SK-N-SH (cell line): ENCODE measurements at regions of chr1 and their contacts with region 1.

Region 1: DNA sequence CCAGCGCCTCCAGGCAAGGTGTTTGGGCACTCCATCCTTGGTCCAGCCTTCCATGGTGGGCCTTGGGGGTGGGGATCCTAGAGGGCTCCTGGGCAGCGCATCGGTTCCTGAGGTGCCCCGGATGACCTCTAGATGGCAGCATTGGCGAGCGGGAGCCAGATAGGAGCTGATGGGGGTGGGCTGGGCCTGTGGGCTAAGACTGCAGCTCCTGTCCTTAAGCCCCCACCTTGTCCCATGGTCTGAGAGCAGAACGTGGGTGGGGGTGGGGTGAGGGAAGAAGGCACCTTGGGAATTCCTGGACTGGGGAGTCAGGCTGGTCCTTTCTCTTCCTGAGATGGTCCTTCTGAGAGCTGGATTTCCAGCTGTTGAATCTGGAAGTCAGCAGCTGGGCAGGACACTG is 93.4 kb upstream of the CSF3R start:
- DNase-seq: peak; percentile 91
- H3K4me3 ChIP-seq: peak overlapping the region in 1 of 2 experiments; percentile 32; a peak in 1 of 4 replicates
- H3K27ac ChIP-seq: no peak overlapping the region
- H3K4me1 ChIP-seq: no peaks in the 10 kb centered on the region; a peak in 1 of 4 replicates
- H3K27me3 ChIP-seq: no peaks in the 10 kb centered on the region
- CTCF ChIP-seq: peak; percentile 83
- EP300 ChIP-seq: no peak
- RAD21 ChIP-seq: peak; percentile 89

Region 2: GRCh38 chr1:36516372-36517325 is 59.5 kb before region 1 on chr1:
- CTCF ChIA-PET with region 1: interaction called, 51 read pairs
- POLR2A ChIA-PET with region 1: no interaction called
- DNase-seq: peak; percentile 87
- H3K4me3 ChIP-seq: peak overlapping the region in 1 of 2 experiments; percentile 43; a peak in 1 of 4 replicates
- H3K27ac ChIP-seq: no peak overlapping the region
- H3K4me1 ChIP-seq: peaks cover 0 to 3% of the 10 kb centered on the region in 2 experiments; a peak in 1 of 4 replicates
- H3K27me3 ChIP-seq: no peaks in the 10 kb centered on the region
- CTCF ChIP-seq: peak; percentile 83
- EP300 ChIP-seq: no peak
- RAD21 ChIP-seq: peak; percentile 93

Region 3: GRCh38 chr1:36594023-36594422 is 17.9 kb after region 1 on chr1:
- CTCF ChIA-PET with region 1: interaction called, 142 read pairs
- POLR2A ChIA-PET with region 1: no interaction called
- DNase-seq: no peak
- H3K4me3 ChIP-seq: no peak overlapping the region
- H3K27ac ChIP-seq: no peak overlapping the region
- H3K4me1 ChIP-seq: no peaks in the 10 kb centered on the region
- H3K27me3 ChIP-seq: no peaks in the 10 kb centered on the region; the same call in 1 of the 2 replicates
- CTCF ChIP-seq: no peak
- EP300 ChIP-seq: no peak
- RAD21 ChIP-seq: no peak

Region 4: GRCh38 chr1:36650200-36651065 is 74.3 kb after region 1 on chr1:
- CTCF ChIA-PET with region 1: interaction called, 10 read pairs
- POLR2A ChIA-PET with region 1: no interaction called
- DNase-seq: peak; percentile 73
- H3K4me3 ChIP-seq: no peak overlapping the region; a peak in 1 of 4 replicates
- H3K27ac ChIP-seq: no peak overlapping the region
- H3K4me1 ChIP-seq: no peaks in the 10 kb centered on the region
- H3K27me3 ChIP-seq: no peaks in the 10 kb centered on the region
- CTCF ChIP-seq: peak; percentile 86
- EP300 ChIP-seq: no peak
- RAD21 ChIP-seq: peak; percentile 64

Region 5: GRCh38 chr1:37038227-37039076 is 462.3 kb after region 1 on chr1:
- CTCF ChIA-PET with region 1: interaction called, 21 read pairs
- POLR2A ChIA-PET with region 1: no interaction called
- DNase-seq: peak; percentile 54
- H3K4me3 ChIP-seq: no peak overlapping the region
- H3K27ac ChIP-seq: no peak overlapping the region
- H3K4me1 ChIP-seq: peaks cover 0 to 2% of the 10 kb centered on the region in 2 experiments; a peak in 1 of 4 replicates
- H3K27me3 ChIP-seq: 0 out of 2 replicates have a peak, but pooled peaks cover 5% of the 10 kb centered on the region
- CTCF ChIP-seq: no peak
- EP300 ChIP-seq: no peak
- RAD21 ChIP-seq: peak; percentile 70

Region 6: GRCh38 chr1:37434292-37434907 is 858.3 kb after region 1 on chr1:
- CTCF ChIA-PET with region 1: interaction called, 78 read pairs
- POLR2A ChIA-PET with region 1: no interaction called
- DNase-seq: peak; percentile 90
- H3K4me3 ChIP-seq: no peak overlapping the region; a peak in 1 of 4 replicates
- H3K27ac ChIP-seq: no peak overlapping the region
- H3K4me1 ChIP-seq: no peaks in the 10 kb centered on the region
- H3K27me3 ChIP-seq: peaks cover 19% of the 10 kb centered on the region; the same call in 1 of the 2 replicates
- CTCF ChIP-seq: peak; percentile 94
- EP300 ChIP-seq: no peak
- RAD21 ChIP-seq: peak; percentile 93